ENCODE measurements at regions of chr14 and their contacts with region 1.

Region 1: DNA sequence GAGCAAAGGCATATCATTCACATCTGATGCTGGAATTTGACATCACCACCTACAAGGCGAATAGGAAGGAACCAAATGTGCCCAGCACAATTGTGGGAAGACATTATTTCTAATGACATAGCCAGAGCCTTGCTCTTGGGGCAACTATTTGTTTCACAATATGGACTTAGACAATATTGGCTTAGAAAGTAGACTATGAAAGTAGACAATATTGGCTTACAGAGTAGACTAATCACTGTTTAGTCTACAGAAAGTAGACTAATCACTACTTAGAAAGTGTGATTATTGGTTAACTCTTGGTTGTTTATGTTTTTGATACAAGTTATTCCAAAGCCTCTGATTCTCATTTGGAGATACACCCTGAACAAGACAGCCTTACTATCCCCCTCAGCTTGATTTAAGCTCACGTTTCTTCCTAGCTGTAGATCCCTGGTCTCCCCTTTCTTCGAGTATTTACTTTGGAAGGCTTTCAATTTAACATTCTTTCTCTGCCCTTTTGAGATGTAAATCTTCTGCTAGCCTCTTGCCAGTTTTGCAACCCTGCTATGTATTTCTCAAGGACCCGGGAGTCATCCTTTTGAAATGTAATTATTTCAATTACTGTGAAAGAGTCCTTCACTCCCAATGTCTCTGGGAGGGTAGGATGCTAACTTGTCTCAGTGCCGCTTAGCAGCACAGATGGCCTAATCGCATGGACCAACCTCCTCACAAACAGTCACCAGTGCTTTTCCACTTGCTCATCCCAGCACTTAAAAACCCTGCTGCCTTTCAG is 843.2 kb downstream of the GALC start:
- DNase-seq: peak; percentile 85
- H3K4me3 ChIP-seq: no peak overlapping the region
- H3K27ac ChIP-seq: no peak overlapping the region
- H3K4me1 ChIP-seq: peaks cover 27% of the 10 kb centered on the region
- H3K27me3 ChIP-seq: peaks cover 3% of the 10 kb centered on the region
- CTCF ChIP-seq: no peak

Region 2: GRCh38 chr14:87170179-87170578 is 20.4 kb after region 1 on chr14:
- CTCF ChIA-PET with region 1: no interaction called
- POLR2A ChIA-PET with region 1: no interaction called
- intact Hi-C with region 1: loop called (anchors 2 kb)
- DNase-seq: peak; percentile 96
- H3K4me3 ChIP-seq: no peak overlapping the region
- H3K27ac ChIP-seq: peak overlapping the region; percentile 48
- H3K4me1 ChIP-seq: peaks cover 26% of the 10 kb centered on the region
- H3K27me3 ChIP-seq: peaks cover 4% of the 10 kb centered on the region
- CTCF ChIP-seq: no peak

Region 3: GRCh38 chr14:87386524-87386923 is 236.8 kb after region 1 on chr14:
- CTCF ChIA-PET with region 1: no interaction called
- POLR2A ChIA-PET with region 1: no interaction called
- intact Hi-C with region 1: no loop called
- DNase-seq: no peak
- H3K4me3 ChIP-seq: no peak overlapping the region
- H3K27ac ChIP-seq: no peak overlapping the region
- H3K4me1 ChIP-seq: no peaks in the 10 kb centered on the region
- H3K27me3 ChIP-seq: no peaks in the 10 kb centered on the region
- CTCF ChIP-seq: no peak

Measured in A673 (cell line).